Colonic mucosa (tissue), 4 donors: ENCODE measurements at regions of chr12 and their contacts with region 1.

Region 1: GRCh38 chr12:10033783-10034545 is 3.5 kb downstream of the CLEC9A start:
- DNase-seq: no peak
- H3K4me3 ChIP-seq: no peak overlapping the region
- H3K27ac ChIP-seq: no peak overlapping the region
- H3K4me1 ChIP-seq: no peaks in the 10 kb centered on the region
- H3K27me3 ChIP-seq: no peaks in the 10 kb centered on the region
- CTCF ChIP-seq: peak; percentile 25

Region 2: GRCh38 chr12:10140001-10140400 is 106.0 kb after region 1 on chr12:
- intact Hi-C with region 1: loop called (anchors 2 kb)
- DNase-seq: peak; percentile 22
- H3K4me3 ChIP-seq: no peak overlapping the region
- H3K27ac ChIP-seq: no peak overlapping the region
- H3K4me1 ChIP-seq: no peaks in the 10 kb centered on the region
- H3K27me3 ChIP-seq: no peaks in the 10 kb centered on the region
- CTCF ChIP-seq: peak; percentile 34